Cardiac septum (tissue), 1 donor: ENCODE measurements at regions of chr17 and their contacts with region 1.

Region 1: DNA sequence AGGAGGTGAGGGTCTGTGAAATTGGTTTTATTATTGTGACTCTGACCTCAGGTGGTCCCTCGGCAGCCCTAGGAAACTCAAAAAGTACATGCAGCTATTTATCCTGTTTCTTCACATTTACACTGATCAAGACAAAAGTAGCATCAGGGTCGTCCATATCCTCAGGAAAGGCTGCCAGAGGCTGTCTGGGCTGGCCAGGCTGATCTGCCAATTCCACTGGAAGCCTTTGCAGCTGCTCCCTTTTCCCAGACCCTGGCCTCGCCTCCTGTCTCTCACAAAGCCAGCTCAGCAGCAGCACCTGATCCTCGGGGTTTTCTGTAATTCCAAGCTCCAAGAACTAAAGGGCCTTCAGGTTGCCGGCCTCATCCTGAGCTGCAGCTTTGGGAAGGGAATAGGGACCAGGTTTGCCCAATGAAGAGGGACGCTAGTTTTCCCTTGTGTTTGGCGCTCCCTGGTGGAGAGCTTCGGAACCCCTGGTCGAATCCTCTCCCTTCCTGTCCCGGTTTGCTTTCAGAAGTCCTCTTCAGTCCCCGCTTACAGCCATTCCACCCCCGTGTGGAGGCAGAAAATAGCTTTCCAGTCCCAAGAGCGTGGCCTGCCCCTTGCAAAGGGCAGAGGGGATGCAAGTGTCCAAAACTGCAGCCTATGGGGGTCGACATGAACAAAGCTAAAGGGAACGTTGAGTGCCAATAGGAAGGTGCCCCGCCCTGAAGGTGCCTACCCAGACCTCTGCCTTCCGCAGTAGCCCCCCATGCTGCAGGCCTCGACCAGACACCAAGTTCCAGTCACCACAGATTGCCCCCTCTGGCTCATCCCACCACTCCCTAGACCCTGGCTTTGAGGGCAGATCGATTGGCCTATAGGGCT is 13.4 kb downstream of the MFSD6L start:
- DNase-seq: peak; percentile 89

Region 2: DNA sequence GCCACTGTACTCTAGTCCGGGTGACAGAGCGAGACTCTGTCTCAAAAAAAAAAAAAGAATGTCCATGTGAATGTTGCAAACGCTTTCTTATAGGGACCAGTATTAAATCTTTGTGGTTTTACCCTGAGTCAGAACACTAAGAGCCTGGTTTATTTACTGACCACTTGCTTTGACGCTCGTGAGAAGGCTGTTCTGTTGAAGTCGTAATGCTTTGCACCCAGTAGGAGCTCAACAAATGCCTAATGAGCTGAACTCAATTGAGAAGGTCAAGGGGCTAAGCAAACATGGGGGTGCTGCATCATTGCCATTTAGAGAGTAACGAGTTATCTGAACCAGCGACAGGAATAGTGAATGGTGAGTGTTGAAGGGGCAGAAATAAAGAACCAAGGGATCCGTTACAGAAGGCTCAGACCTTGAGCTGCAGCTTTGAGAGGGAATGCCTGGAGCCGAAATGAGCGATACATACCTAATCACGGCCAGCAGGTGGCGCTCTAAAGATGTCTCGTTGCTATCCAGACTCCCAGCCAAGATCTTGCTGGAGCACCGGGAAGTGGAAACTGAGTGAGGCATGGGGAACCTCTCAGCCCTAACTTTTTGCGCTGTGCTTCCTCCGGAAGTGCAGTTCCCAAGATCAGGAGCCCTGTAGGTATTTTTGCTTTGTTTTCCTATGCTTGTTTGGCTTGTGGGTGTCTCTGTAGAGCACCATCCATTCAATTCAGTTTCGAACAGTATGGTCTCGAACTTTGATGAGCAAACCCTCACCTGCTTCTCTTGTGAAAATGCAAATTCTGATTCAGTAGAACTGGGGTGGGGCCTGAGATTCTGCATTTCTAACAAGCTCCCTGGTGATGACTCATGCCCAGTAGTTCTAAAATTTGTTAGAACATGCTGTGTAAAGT is 375.6 kb before region 1 on chr17:
- intact Hi-C with region 1: loop called (anchors 2 kb)
- DNase-seq: peak; percentile 94

Region 3: DNA sequence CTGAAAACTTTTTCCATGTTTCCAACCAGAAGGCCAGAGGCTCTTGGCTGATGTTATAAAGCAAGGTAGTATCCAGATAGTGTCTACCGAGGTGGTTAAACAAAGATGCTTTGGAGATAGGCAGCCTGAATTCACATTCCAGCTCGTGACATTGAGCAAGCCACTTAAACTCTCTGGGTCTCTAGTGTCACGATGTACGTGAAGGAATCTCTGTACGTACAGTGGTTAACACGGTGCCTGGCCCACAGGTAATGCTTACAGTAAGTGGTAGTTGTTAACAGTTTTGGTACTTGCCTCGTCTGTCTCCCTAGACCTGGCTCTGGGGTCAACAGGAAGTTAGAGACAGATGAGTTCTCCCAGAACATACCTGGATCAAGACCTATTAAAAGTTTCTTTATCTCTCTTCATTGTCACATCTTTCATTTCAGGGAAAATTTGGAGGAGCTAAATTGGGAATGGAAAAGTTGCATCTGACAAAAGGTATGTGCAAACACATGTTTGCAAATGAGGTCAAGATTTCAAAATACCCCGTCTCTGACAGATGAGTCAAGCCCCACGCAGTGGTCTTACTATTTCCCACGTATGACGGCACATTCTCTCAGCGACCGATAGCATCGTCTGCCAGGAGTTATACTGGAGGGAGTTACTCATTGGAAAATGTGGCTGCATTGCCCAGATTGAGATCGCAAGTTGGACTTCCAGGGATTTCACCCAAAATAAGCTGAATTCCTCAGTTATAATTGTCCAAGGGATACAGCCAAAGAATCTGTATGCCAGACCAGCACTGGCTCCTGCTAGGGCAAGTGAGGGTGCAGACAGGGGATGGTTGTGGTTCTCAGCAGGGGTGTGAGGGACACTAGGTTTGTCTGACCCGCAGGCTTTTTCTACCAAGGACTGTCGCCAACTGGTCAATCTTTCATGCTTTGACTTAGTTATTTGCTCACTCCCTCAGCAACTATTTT is 136.3 kb before region 1 on chr17:
- intact Hi-C with region 1: no loop called
- DNase-seq: no peak

Region 4: GRCh38 chr17:8753976-8754440 is 31.8 kb before region 1 on chr17:
- intact Hi-C with region 1: loop called (anchors 5 kb)
- DNase-seq: no peak

Region 5: DNA sequence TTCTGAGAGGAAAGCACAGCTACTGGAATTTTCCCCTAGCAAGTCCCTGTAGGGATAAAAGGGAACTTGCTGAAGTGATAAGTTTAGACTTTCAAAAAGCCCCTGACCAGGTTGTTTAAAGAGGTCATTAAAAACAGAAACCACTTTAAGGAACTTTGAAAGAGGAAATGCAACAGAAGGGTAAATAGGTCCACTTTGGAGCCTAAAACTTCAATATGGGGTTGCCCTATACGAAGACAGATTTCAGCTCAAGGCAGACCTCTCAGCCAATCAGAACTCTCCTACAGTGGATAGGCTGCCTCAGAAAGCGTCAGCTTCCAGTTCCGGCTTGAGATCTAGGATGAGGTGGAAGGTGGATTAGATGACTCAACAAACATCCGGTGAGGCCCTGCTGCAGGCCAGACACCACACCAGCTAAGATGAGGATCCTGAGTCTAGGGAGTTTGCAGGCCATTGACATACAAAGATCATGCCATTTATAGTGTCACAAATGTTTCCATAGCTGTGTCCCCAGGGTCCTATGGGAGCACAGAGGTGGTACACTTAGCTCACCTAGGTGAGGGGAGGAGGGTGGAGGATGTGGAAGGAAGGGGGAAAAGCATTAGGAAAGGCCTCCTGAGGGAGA is 21.3 kb after region 1 on chr17:
- intact Hi-C with region 1: no loop called
- DNase-seq: no peak

Region 6: DNA sequence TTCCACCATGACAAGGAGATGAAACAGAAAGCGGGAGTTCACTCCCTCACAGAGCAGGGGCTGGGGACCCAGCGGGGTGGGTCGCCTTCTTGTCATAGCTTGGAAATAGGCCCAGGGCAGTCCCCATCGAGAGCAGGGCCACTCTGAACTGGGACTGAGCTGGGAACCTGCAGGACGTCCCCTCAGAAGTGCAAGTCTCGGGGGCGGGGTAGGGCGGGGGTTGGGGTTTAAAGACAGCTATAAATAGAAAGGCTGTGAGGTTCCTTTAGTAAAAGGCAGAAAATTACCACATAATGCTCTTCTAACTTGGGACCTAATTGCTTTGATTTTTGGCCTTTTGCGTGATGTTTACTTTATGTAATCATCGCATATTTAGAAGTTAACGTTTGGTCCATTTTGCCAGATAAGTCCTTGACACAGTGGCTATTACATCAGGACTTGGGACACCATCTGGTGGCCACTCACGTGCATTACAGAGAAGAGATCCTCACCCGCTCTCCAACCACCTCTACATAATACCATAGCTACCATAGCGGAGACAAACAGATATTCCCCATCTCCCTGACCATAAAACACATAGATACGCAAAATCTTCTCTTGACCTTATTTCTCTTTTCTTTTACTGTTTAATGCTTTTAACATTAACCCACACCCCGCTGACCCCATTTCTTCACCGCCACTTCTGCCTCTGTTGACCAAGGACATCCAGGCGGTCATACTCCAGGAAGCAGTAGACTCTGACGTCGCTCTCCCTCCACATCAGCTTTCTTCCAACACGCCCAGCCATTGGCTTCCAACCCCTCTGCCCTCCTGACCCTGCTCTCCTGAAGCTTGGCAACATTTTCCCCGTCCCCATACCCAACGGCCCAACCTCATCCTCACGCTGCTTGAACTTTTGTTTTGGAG is 109.1 kb after region 1 on chr17:
- intact Hi-C with region 1: loop called (anchors 5 kb)
- DNase-seq: peak; percentile 70

Region 7: GRCh38 chr17:8905331-8905730 is 119.6 kb after region 1 on chr17:
- intact Hi-C with region 1: no loop called
- DNase-seq: peak; percentile 31